Dendritic cell treated with granulocyte-macrophage colony-stimulating factor and Interleukin-4, amounts not matched to agents 40 ng/mL and 50 ng/mL, for 4 days (primary cell): ENCODE measurements at regions of chr2 and their contacts with region 1.

Region 1: DNA sequence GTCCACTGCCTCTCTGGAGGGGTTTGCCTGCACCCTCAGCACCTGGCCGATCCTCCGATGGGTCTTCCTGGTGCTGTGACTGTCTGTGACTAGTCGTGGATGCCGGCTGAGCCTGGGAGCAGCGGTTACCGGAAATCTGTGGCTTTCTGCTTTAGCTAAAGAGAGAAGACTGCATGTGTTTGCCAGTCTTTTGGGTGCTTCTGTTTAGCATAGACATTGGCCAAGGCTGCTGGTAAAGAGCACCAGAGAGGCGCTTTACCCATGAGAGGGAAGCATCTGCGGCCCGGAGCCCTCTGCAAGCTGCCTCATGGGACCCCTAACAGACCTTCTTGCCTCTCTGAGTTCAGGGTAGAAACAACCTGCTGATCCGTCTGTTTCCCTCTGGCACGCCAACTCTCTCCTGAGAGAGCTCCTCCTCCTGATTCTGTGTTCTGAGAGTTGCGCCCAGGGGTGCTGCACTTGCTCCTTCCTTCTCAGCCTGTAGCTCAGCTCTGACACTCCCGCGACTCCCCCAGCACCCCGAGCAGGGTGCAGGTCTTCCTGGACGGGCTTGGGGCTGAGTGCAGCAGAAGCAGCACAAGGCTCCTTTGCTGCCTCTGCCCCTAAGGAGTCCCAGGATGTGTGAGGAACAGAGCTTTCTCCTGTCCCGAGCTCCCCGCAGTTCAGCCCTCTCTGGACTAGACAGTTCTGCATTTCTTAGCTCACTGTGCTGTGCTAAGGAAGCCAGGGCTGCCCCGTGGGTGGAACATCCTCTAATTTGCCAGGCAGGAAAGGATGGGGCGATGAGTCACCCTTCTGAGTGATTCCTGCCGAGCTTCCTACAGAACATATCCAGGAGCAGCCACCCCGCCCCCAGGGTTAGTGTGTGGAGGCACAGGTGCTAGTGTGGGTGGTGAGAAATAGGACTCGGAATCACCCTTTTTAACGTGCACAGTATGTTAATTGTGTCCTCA is 203.2 kb downstream of the SH3RF3 start:
- H3K4me3 Mint-ChIP-seq: peak overlapping the region; percentile 60
- H3K27ac Mint-ChIP-seq: peak overlapping the region; percentile 74
- H3K4me1 Mint-ChIP-seq: peaks cover 64% of the 10 kb centered on the region
- H3K27me3 Mint-ChIP-seq: peaks cover 44% of the 10 kb centered on the region

Region 2: GRCh38 chr2:109222825-109223471 is 109.2 kb before region 1 on chr2:
- intact Hi-C with region 1: loop called (anchors 10 kb)
- H3K4me3 Mint-ChIP-seq: no peak overlapping the region
- H3K27ac Mint-ChIP-seq: no peak overlapping the region
- H3K4me1 Mint-ChIP-seq: peaks cover 6% of the 10 kb centered on the region
- H3K27me3 Mint-ChIP-seq: peaks cover 2% of the 10 kb centered on the region

Region 3: GRCh38 chr2:109254174-109254904 is 77.8 kb before region 1 on chr2:
- intact Hi-C with region 1: loop called (anchors 1 kb)
- H3K4me3 Mint-ChIP-seq: peak overlapping the region; percentile 9
- H3K27ac Mint-ChIP-seq: peak overlapping the region; percentile 45
- H3K4me1 Mint-ChIP-seq: peaks cover 46% of the 10 kb centered on the region
- H3K27me3 Mint-ChIP-seq: peaks cover 15% of the 10 kb centered on the region